Head of caudate nucleus (tissue), 42 donors: ENCODE measurements at regions of chr19 and their contacts with region 1.

Region 1: GRCh38 chr19:52139252-52140031 is at the start of gene ZNF616:
- DNase-seq: peak; percentile 81 to 99 (median 98)

Region 2: DNA sequence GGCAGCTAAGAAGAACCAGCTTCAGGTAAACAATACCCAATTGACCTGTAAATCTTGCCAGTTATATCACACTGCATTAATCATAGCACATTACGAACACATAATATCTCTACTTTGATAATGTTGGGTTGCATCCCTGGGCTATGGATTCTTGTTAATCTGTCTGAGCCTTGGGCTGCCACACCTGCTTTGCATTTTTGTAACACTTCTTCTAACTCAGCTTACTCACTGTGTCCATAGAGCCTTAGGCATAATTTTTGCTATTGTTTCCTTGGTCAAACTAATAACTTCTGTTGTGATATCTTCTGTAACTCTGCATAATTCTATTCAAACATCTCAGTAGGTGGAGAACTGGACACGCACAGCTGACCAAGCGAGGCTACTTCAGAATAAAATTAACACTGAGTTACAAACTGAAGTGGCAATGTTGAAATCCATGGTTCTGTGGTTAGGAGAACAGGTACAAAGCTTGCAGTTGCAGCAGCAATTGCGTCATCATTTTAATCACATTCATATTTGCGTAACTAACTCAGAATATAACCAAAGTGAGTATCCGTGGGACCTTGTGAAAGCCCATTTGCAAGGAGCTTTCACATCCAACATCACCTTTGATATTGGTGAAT is 159.2 kb before region 1 on chr19:
- intact Hi-C with region 1: no loop called
- DNase-seq: no peak

Region 3: DNA sequence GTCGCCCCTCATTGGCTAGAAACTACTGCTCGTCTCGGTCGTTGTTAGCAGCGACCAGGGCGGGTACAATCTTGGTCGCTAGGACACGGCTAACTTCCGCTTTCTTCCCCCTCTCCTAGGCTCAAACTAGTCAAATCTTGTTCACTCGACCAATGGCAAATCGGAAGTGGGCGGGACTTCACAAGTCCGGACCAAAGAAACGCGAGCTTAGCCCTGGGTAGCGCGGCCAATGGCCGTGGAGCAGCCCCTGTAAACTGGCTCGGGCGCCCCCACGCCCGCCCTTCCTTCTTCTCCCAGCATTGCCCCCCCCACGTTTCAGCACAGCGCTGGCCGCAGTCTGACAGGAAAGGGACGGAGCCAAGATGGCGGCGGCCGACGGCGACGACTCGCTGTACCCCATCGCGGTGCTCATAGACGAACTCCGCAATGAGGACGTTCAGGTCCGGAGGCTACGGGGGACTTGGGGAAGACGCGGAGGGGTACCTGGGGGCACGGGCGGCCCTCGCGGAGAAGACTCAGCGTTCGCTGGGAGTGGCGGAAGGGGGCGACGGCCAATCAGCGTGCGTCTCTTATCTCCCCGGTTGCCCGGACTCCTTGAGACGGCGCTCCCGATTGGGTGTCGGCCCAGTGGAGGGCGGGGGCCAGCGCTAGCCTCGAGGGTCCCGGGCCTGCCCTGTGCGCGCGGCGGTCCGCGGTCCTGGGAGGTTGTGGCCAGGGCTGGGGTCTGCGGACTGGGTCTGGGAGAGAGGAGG is 50.5 kb after region 1 on chr19 and contains the start of gene PPP2R1A:
- intact Hi-C with region 1: loop called (anchors 5 kb)
- DNase-seq: peak; percentile 97 to 100 (median 100)

Region 4: DNA sequence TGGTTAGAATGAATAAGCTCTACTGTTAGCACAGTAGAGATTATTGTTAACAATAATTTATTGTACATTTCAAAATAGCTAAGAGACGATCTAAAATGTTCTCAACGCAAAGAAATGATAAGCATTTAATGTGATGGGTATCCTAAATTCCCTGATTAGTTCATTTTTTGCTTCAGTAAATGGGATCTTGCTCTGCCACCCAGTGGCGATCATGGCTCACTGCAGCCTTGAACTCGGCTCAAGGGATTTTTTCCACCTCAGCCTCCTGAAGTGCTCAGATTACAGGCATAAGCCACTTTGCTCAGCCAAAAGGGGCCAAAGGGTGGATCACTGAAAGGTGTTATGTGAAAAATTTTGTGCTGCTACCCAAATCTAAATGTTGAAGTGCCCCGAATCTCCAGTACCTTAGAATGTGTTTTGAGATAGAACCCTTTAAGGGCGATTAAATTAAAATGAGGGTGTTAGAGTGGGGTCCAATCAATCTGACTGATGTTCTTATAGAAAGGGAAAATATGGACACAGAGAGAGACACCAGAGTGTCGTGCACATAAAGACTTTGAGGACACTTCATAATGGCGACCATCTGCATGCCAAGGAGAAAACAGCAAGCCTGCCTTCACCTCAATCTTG is 98.4 kb after region 1 on chr19:
- intact Hi-C with region 1: loop called (anchors 2 kb)
- DNase-seq: peak in 41 of 42 donors; percentile 43 to 88 (median 67)